Adrenal gland (tissue), 19 donors: ENCODE measurements at regions of chr19 and their contacts with region 1.

Region 1: DNA sequence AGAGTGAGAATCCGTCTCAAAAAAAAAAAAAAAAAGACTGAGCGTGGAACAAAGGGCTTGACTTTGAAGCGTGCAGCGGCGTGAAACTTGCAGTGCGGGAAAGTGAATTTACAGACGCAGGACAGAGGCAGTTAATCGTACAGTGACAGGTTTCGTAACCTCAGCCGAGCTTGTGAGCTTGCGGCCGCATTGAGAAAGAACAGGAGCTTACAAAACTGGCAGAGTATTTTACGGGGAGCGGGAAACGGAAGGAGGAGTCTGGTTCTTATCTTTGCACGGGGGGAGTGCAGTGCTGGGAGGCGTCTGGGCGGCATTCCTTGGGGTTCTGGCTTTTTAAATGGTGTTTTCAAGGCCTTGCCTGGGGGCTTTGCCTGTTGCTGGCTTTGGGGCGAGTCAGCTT is 6.0 kb upstream of the BSG start:
- DNase-seq: peak; percentile 42 to 81 (median 57)
- H3K4me3 ChIP-seq: no peak overlapping the region
- H3K27ac ChIP-seq: peak overlapping the region in 2 of 5 donors; percentile 26 to 52
- H3K4me1 ChIP-seq: peaks cover 4 to 5% of the 10 kb centered on the region in 2 donors
- H3K27me3 ChIP-seq: no peaks in the 10 kb centered on the region
- CTCF ChIP-seq: no peak
- POLR2A ChIP-seq: no peak

Region 2: DNA sequence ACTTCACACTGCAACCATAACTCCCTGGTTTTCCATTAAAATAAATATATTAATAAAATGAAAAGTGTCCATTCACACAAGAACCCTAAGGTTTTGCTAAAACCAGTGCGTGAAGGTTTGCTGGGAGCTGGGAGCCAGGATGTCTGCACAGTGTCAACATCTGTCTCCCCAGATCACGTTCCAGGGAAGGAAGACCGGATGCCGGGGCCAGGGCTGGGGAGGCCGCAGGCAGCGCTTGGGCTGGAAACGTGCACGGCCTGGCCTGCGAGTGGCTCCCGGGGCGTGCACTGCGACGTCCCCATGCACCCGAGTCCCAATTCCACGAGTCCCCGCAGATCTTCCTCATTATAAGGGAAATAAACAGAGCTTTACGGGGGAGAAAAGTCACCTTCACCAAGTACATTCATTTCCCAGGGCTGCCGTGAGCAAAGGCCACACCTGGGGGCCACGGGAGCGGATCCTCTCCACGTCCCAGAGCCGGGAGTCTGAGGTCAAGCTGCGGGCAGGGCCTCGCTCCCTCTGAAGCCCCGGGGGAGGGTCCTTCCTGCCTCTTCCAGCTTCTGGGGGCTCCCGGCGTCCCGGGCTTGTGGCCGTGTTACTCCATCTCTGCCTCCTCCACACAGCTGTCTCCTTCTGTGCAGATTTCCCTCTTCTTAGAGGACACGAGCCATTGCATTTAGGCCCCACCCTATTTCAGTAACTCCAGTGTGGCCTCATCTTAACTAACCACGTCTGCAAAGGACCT is 118.4 kb before region 1 on chr19:
- intact Hi-C with region 1: no loop called
- DNase-seq: peak in 3 of 7 donors; percentile 12 to 66 (median 41)
- H3K4me3 ChIP-seq: no peak overlapping the region
- H3K27ac ChIP-seq: peak overlapping the region in 2 of 5 donors; percentile 42 to 44
- H3K4me1 ChIP-seq: peaks cover 0 to 5% of the 10 kb centered on the region in 2 donors
- H3K27me3 ChIP-seq: no peaks in the 10 kb centered on the region
- CTCF ChIP-seq: no peak
- POLR2A ChIP-seq: no peak

Region 3: GRCh38 chr19:531009-531752 is 35.2 kb before region 1 on chr19:
- intact Hi-C with region 1: loop called in 1 of 2 experiments (anchors 5 kb)
- DNase-seq: peak; percentile 78 to 91 (median 84)
- H3K4me3 ChIP-seq: peak overlapping the region; percentile 16 to 100 (median 83)
- H3K27ac ChIP-seq: peak overlapping the region; percentile 79 to 97 (median 87)
- H3K4me1 ChIP-seq: peaks cover 13 to 14% of the 10 kb centered on the region in 2 donors
- H3K27me3 ChIP-seq: no peaks in the 10 kb centered on the region
- CTCF ChIP-seq: peak in 1 of 6 experiments; percentile 26
- POLR2A ChIP-seq: no peak

Region 4: GRCh38 chr19:680287-681028 is 114.1 kb after region 1 on chr19:
- intact Hi-C with region 1: no loop called
- DNase-seq: peak; percentile 100
- H3K4me3 ChIP-seq: peak overlapping the region in 3 of 4 donors; percentile 38 to 89 (median 62)
- H3K27ac ChIP-seq: peak overlapping the region; percentile 81 to 99 (median 97)
- H3K4me1 ChIP-seq: peaks cover 24 to 32% of the 10 kb centered on the region in 2 donors
- H3K27me3 ChIP-seq: no peaks in the 10 kb centered on the region
- CTCF ChIP-seq: peak in 3 of 6 experiments; percentile 39 to 67 (median 42)
- POLR2A ChIP-seq: peak; percentile 97 to 99

Region 5: DNA sequence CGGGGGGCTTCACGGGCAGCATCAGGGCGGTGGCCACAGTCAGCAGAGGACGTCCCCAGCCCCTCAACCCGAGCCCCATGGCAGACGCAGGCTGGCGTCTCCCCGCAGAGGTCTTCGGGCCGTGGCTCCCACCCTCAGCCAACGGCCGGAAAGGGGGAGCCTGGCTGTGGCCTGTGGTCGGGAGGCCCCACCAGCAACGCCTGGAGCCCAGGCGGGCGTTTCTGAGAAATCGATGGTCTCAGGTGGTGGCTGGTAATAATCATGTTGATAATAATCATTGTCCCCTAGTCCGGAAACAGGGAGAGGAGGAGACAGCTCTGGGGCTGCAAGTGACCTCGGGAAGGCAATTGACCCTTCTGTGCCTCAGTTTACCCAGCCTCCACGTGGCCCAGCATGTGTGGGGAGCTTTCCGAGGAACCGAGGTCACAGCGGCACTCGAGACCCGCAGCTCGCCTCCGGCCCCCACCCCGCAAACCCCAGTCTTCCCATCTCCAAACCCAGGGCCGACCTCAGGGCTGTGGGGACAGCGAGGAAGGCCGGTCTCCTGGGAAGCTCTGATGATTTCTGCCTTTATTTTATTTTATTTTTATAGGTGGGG is 129.0 kb after region 1 on chr19 and contains the start of gene PRSS57:
- intact Hi-C with region 1: no loop called
- DNase-seq: no peak
- H3K4me3 ChIP-seq: no peak within 1 kb of the TSS
- H3K27ac ChIP-seq: no peak within 1 kb of the TSS
- H3K4me1 ChIP-seq: no peaks in the 10 kb centered on the region
- H3K27me3 ChIP-seq: peaks cover 15% of the 10 kb centered on the region
- CTCF ChIP-seq: no peak
- POLR2A ChIP-seq: no peak
- total RNA-seq, gene PRSS57: 0.22 to 0.51 TPM in 2 of 9 donors, not detected in the others